ENCODE measurements at regions of chr15 and their contacts with region 1.

Region 1: DNA sequence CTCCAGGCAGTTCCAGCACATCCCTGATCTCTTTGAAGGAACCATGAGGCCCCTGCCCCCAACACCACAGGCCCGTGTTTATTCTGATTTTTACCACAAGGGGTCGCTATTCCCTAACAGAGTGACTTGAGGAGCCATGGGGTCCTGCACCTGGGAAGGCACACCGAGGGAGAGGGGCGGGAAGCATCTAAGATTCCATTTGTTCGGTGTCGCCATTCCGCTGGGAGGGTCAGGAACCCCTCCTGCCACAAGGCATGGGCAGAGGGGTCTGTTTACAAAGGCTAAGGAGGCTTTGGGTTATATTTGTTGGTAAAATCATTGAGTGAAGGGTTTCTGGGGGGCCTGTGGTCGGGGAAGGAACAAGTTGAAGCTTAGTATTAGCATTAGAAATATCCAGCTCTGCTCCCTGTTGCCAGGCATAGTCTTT is 77.1 kb downstream of the WDR76 start:
- DNase-seq: peak; percentile 78
- H3K4me3 ChIP-seq: no peak overlapping the region
- H3K27ac ChIP-seq: no peak overlapping the region
- H3K4me1 ChIP-seq: peaks cover 3% of the 10 kb centered on the region
- CTCF ChIP-seq: peak; percentile 93

Region 2: GRCh38 chr15:44033894-44034293 is 130.0 kb after region 1 on chr15:
- CTCF ChIA-PET with region 1: no interaction called
- POLR2A ChIA-PET with region 1: no interaction called
- intact Hi-C with region 1: no loop called
- DNase-seq: no peak
- H3K4me3 ChIP-seq: no peak overlapping the region
- H3K27ac ChIP-seq: no peak overlapping the region
- H3K4me1 ChIP-seq: no peaks in the 10 kb centered on the region
- CTCF ChIP-seq: no peak

Region 3: GRCh38 chr15:44066316-44066740 is 162.5 kb after region 1 on chr15:
- CTCF ChIA-PET with region 1: no interaction called
- POLR2A ChIA-PET with region 1: interaction called, 3 read pairs
- intact Hi-C with region 1: loop called (anchors 2 kb)
- DNase-seq: peak; percentile 83
- H3K4me3 ChIP-seq: no peak overlapping the region
- H3K27ac ChIP-seq: no peak overlapping the region
- H3K4me1 ChIP-seq: no peaks in the 10 kb centered on the region
- CTCF ChIP-seq: peak; percentile 98

Region 4: GRCh38 chr15:44215594-44215993 is 311.7 kb after region 1 on chr15:
- CTCF ChIA-PET with region 1: interaction called, 3 read pairs
- POLR2A ChIA-PET with region 1: no interaction called
- intact Hi-C with region 1: loop called (anchors 5 kb)
- DNase-seq: no peak
- H3K4me3 ChIP-seq: no peak overlapping the region
- H3K27ac ChIP-seq: no peak overlapping the region
- H3K4me1 ChIP-seq: no peaks in the 10 kb centered on the region
- CTCF ChIP-seq: no peak